Posterior cingulate gyrus (tissue), 11 donors: ENCODE measurements at regions of chr5 and their contacts with region 1.

Region 1: GRCh38 chr5:142655339-142656267 is 30.3 kb downstream of the FGF1 start:
- DNase-seq: peak; percentile 78 to 98 (median 92)

Region 2: DNA sequence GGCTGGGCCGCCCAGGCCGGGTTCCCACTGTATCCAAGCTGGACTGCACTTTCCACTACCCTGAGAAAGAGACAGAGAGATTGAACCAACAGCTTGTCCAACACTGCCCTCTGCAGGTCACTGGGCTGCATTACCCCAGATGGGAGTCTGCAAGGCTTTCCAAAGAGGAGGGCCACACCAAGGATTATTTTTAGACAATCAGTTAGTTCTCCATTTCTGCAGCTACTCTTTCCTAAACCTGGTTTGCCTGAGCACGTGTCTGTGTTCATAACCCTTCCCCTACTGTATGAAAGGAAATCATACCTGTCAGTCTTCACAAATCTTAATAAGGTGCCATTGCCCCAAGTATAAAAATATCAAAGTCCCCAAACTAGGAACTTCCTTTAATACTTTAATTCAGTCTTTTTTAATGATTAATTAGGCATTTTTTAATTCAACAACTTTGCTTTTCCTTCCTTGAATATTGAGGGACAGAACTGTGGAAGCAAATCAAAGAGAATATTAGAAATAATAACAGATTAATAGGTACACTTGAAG is 43.6 kb after region 1 on chr5:
- intact Hi-C with region 1: loop called (anchors 1 kb)
- DNase-seq: peak; percentile 77 to 97 (median 92)